MCF 10A (cell line): ENCODE measurements at regions of chr3 and their contacts with region 1.

Region 1: DNA sequence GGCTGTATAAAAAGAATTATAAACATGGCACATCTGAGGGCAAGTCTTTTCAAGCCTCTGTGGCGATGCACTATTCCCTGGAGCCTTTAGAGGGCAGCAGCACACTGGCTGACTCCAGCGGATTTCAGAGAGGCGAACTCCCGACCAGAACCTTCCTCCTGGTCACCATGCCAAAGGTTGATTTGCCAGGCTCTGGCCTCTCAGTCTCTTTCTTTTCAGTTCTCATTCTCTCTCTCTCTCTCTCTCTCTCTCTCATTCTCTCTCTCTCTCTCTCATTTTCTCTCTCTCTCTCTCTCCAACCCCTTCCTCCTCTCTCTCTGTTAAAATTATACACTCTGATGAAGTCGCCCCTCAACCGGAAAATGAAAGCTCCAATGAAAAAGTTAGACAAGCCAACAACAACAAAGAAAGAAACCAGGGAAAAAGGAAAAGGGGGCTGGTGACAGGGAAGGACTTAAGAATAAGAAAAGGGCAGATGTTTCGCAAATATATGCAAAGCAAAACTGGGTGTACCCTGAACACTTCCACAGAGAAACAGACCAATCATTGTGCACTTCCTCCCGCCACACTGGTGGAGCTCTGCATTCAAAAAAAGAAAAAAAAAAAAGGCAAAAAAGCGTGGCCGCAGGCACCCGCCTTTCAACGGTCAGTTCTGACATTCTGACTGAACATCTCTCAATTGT is 90.2 kb downstream of the TIGIT start:
- DNase-seq: peak; percentile 76
- H3K4me3 Mint-ChIP-seq: peak overlapping the region; percentile 53
- H3K27ac Mint-ChIP-seq: no peak overlapping the region
- H3K4me1 Mint-ChIP-seq: no peaks in the 10 kb centered on the region
- H3K27me3 Mint-ChIP-seq: no peaks in the 10 kb centered on the region
- CTCF ChIP-seq: peak; percentile 95

Region 2: DNA sequence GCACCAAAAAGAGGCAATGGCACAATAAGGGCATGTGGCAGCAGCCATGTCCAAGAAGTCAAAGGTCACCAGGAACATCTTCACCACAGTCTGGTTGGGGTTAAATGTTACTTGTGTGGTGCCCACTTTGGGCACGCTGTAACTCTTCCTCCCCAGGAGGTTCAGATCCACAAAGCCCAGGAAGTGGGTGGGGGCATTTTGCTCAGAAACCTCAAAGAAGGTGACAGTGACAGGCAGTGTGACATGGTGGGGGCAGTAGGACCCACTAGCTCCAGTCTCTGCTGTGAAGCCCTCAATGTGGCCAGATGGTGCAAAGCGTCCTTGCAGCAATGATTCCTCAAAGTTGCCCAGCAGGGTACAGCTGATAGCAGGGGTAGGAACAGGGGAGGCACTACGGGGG is 152.4 kb before region 1 on chr3:
- CTCF ChIA-PET with region 1: no interaction called
- POLR2A ChIA-PET with region 1: no interaction called
- intact Hi-C with region 1: no loop called
- DNase-seq: no peak
- H3K4me3 Mint-ChIP-seq: no peak overlapping the region
- H3K27ac Mint-ChIP-seq: no peak overlapping the region
- H3K4me1 Mint-ChIP-seq: no peaks in the 10 kb centered on the region
- H3K27me3 Mint-ChIP-seq: peaks cover 11% of the 10 kb centered on the region
- CTCF ChIP-seq: no peak

Region 3: GRCh38 chr3:114362815-114363214 is 21.2 kb before region 1 on chr3:
- CTCF ChIA-PET with region 1: interaction called, 19 read pairs
- POLR2A ChIA-PET with region 1: no interaction called
- intact Hi-C with region 1: no loop called
- DNase-seq: peak; percentile 33
- H3K4me3 Mint-ChIP-seq: no peak overlapping the region
- H3K27ac Mint-ChIP-seq: no peak overlapping the region
- H3K4me1 Mint-ChIP-seq: peaks cover 7% of the 10 kb centered on the region
- H3K27me3 Mint-ChIP-seq: no peaks in the 10 kb centered on the region
- CTCF ChIP-seq: peak; percentile 48

Region 4: GRCh38 chr3:114405202-114405990 is 21.4 kb after region 1 on chr3:
- CTCF ChIA-PET with region 1: interaction called, 52 read pairs
- POLR2A ChIA-PET with region 1: interaction called, 4 read pairs
- intact Hi-C with region 1: no loop called
- DNase-seq: no peak
- H3K4me3 Mint-ChIP-seq: no peak overlapping the region
- H3K27ac Mint-ChIP-seq: no peak overlapping the region
- H3K4me1 Mint-ChIP-seq: peaks cover 5% of the 10 kb centered on the region
- H3K27me3 Mint-ChIP-seq: no peaks in the 10 kb centered on the region
- CTCF ChIP-seq: no peak

Region 5: GRCh38 chr3:114432310-114432709 is 48.3 kb after region 1 on chr3:
- CTCF ChIA-PET with region 1: interaction called, 16 read pairs
- POLR2A ChIA-PET with region 1: no interaction called
- intact Hi-C with region 1: no loop called
- DNase-seq: no peak
- H3K4me3 Mint-ChIP-seq: no peak overlapping the region
- H3K27ac Mint-ChIP-seq: no peak overlapping the region
- H3K4me1 Mint-ChIP-seq: peaks cover 12% of the 10 kb centered on the region
- H3K27me3 Mint-ChIP-seq: no peaks in the 10 kb centered on the region
- CTCF ChIP-seq: no peak

Region 6: DNA sequence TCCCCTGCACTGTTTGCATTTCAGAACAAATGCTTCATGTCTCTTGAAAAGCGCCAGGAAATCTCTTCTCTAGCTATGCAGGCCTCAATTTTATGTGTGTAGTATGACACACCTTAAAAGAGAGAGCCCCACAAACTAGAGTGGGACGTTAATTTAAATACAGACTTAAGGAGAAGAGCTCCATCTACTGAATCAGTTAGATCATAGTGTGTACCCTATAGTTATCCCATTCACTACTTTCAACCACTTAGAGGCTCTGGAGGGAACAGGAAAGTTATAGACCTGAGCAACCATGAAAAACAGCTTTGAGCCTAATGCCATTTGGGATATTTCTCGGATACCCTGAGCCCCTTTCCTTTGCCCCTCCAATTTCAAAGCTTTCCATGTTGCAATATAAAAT is 63.5 kb after region 1 on chr3:
- CTCF ChIA-PET with region 1: interaction called, 12 read pairs
- POLR2A ChIA-PET with region 1: interaction called, 3 read pairs
- intact Hi-C with region 1: no loop called
- DNase-seq: peak; percentile 5
- H3K4me3 Mint-ChIP-seq: peak overlapping the region; percentile 56
- H3K27ac Mint-ChIP-seq: peak overlapping the region; percentile 47
- H3K4me1 Mint-ChIP-seq: peaks cover 37% of the 10 kb centered on the region
- H3K27me3 Mint-ChIP-seq: no peaks in the 10 kb centered on the region
- CTCF ChIP-seq: no peak

Region 7: GRCh38 chr3:114827495-114827894 is 443.5 kb after region 1 on chr3:
- CTCF ChIA-PET with region 1: interaction called, 4 read pairs
- POLR2A ChIA-PET with region 1: no interaction called
- intact Hi-C with region 1: loop called (anchors 1 kb)
- DNase-seq: peak; percentile 50
- H3K4me3 Mint-ChIP-seq: no peak overlapping the region
- H3K27ac Mint-ChIP-seq: no peak overlapping the region
- H3K4me1 Mint-ChIP-seq: no peaks in the 10 kb centered on the region
- H3K27me3 Mint-ChIP-seq: no peaks in the 10 kb centered on the region
- CTCF ChIP-seq: peak; percentile 64

Region 8: DNA sequence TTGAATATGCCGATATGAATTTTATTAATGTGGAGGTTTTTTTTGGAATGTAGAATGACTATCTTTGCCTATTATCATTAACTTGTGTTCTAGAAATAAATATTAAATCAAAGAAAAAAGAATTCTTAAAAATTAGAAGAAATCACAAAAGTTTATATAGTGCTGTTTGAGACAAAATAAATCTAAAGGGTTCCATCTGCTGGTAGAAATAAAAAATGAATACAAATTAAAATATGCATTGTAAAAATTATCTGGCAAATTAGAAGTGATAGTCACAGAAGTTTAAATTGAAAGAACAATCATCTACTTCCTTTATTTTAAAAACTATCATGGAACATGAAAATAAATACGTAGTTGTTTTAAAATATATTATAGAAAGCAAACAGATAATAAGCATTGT is 785.8 kb after region 1 on chr3:
- CTCF ChIA-PET with region 1: interaction called, 8 read pairs
- POLR2A ChIA-PET with region 1: no interaction called
- intact Hi-C with region 1: loop called (anchors 5 kb)
- DNase-seq: no peak
- H3K4me3 Mint-ChIP-seq: no peak overlapping the region
- H3K27ac Mint-ChIP-seq: no peak overlapping the region
- H3K4me1 Mint-ChIP-seq: no peaks in the 10 kb centered on the region
- H3K27me3 Mint-ChIP-seq: no peaks in the 10 kb centered on the region
- CTCF ChIP-seq: peak; percentile 30